Mucosa of descending colon (tissue), 3 donors: ENCODE measurements at regions of chr19 and their contacts with region 1.

Region 1: DNA sequence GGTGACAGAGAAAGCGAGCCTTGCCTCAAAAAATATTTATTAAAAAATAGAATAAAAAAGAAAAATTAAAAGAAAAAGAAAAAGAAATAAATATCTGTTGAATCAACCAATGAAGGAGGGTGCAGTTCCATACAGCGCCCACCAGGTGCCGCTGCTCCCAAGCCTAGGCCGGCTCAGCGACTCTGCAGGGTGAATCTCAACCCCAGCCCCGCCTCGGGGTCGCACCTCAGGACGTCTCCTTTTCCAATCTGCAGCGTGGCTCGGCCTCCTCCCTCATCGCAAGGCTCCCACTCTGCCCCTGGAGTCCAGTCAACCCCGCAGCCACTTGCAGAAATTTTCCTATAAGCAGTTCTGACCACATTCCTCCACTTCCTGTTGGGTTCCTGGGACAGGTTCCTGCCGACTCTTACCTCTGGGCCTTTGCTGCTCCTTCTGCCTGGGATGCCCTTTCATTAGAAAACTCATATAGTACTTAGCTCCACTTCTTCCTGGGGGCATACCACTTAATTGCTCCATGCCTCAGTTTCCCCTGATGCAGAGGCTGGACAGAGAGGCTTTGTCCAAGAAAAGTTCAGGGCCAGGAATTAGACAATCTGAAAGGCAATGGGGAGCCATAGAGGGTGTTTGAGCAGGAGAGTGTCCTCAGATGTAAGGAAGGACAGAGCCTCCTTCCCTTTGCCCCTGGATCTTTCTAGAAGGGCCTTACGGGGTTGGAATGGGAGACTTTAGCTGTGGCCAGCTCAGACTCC is 24.3 kb downstream of the NFILZ start:
- DNase-seq: peak; percentile 40 to 62 (median 58)
- ATAC-seq: peak; percentile 89
- H3K4me3 ChIP-seq: no peak overlapping the region
- H3K4me1 ChIP-seq: no peaks in the 10 kb centered on the region
- CTCF ChIP-seq: peak; percentile 95

Region 2: DNA sequence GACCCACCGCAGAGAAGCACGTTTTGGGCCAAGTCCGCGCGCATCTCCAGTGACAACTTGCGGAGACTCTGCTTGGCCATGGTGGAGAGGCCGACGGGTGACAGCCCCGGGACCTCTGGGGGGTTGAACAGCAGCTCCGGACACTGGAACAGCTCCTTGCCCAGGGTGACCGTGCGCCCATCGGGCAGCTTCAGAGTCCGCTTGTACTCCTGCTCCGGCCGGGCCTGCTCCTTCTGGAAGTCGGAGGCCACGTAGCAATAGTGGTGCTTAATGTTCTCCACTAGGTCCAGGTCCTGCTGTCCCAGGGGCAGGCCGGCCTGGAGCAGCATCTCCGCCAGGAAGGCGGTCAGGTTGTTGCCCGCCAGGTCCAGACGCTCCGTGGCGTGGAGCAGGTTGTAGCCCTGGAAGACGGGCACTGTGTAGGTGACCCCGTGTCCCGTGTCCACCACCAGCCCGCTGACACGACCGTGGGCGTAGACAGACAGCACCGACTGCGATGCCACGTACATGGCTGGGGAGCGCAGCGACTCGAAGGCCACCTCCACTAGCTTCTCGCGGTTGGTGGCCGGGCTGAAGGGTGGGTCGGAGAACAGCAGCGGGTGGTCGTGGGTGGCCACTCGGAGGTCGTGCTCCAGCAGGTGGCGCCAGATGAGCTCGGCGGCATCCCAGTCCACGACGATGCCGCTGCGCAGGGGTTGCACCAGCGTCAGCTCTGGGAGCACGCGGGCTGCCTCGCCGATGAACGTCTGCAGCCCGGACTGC is 43.1 kb after region 1 on chr19:
- intact Hi-C with region 1: no loop called
- DNase-seq: no peak
- ATAC-seq: no peak
- H3K4me3 ChIP-seq: no peak overlapping the region
- H3K4me1 ChIP-seq: no peaks in the 10 kb centered on the region
- CTCF ChIP-seq: no peak

Region 3: GRCh38 chr19:9075064-9075949 is 420.5 kb after region 1 on chr19:
- intact Hi-C with region 1: loop called in 1 of 2 experiments (anchors 5 kb)
- DNase-seq: peak; percentile 31 to 63 (median 41)
- ATAC-seq: peak; percentile 86
- H3K4me3 ChIP-seq: no peak overlapping the region
- H3K4me1 ChIP-seq: no peaks in the 10 kb centered on the region
- CTCF ChIP-seq: no peak